ENCODE measurements at regions of chr13 and their contacts with region 1.

Region 1: GRCh38 chr13:38804536-38804935 is 117.7 kb downstream of the FREM2 start:
- DNase-seq: no peak
- H3K4me3 ChIP-seq: peak overlapping the region in 6 of 59 donors; percentile 4 to 21 (median 16)
- H3K27ac ChIP-seq: peak overlapping the region in 33 of 59 donors; percentile 1 to 76 (median 41)
- H3K27me3 ChIP-seq: no peaks in the 10 kb centered on the region
- CTCF ChIP-seq: no peak

Region 2: GRCh38 chr13:38819053-38819452 is 14.5 kb after region 1 on chr13:
- intact Hi-C with region 1: loop called in 1 of 2 experiments (anchors 2 kb)
- DNase-seq: peak in 5 of 10 donors; percentile 35 to 61 (median 39)
- H3K4me3 ChIP-seq: no peak overlapping the region
- H3K27ac ChIP-seq: peak overlapping the region in 42 of 59 donors; percentile 9 to 93 (median 46)
- H3K27me3 ChIP-seq: no peaks in the 10 kb centered on the region
- CTCF ChIP-seq: no peak

Measured in dorsolateral prefrontal cortex (tissue), 120 donors.